Astrocyte of the cerebellum (primary cell): ENCODE measurements at regions of chr11 and their contacts with region 1.

Region 1: GRCh38 chr11:86919557-86920210 is 35.5 kb downstream of the FZD4 start:
- DNase-seq: peak; percentile 75
- H3K4me3 ChIP-seq: no peak overlapping the region
- CTCF ChIP-seq: peak; percentile 71

Region 2: GRCh38 chr11:86869966-86870570 is 49.6 kb before region 1 on chr11:
- in situ Hi-C with region 1: loop called (anchors 5 kb)
- DNase-seq: peak; percentile 43
- H3K4me3 ChIP-seq: no peak overlapping the region
- CTCF ChIP-seq: peak; percentile 71